ENCODE measurements at regions of chr7 and their contacts with region 1.

Region 1: DNA sequence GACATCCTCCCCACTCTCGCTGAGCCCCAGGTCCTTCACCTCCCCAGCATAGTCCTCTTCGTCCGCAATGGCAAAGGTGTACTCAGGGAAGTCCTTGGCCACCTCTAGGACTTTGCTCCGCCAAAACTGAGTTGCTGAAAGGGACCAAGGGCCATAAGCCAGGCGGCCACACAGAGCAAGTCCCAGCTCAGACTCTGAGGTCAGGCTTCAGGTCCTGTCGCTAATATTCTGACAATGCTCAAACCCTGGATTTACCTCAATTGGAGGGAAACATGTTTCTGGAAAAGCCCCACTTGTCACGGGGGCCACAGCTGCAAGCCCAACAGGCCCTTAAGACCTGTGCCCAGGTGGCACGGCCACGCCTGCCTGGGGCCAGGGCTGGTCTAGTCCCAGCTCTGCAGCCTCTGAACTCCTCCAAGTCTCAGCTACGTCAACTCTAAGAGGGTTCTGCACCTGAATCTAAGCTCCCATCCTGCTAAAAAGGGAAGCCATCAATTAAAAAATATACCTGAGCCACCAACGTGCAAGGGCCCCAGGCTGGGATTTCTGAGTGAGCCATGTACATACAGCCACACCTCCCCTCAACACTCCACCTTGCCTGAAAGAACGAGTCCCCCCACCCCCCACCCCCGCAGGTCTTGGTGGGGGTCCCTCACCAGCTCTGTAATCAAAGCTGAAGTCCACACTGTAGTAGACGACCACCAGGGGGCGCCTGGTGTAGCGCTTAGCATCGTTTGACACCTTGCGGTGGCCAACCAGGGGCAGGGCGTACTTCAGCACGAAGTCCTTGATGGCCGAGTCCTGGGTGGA is 22.9 kb downstream of the PDIA4 start:
- DNase-seq: peak; percentile 57 to 80 (median 73)
- ATAC-seq: peak; percentile 96
- H3K4me3 ChIP-seq: no peak overlapping the region
- H3K4me3 Mint-ChIP-seq: no peak overlapping the region
- H3K27ac ChIP-seq: no peak overlapping the region
- H3K27ac Mint-ChIP-seq: peak overlapping the region in 5 of 9 donors; percentile 65 to 90 (median 74)
- H3K4me1 ChIP-seq: no peaks in the 10 kb centered on the region
- H3K4me1 Mint-ChIP-seq: peaks cover 0 to 9% (median 5%) of the 10 kb centered on the region in 7 donors
- H3K27me3 ChIP-seq: no peaks in the 10 kb centered on the region
- H3K27me3 Mint-ChIP-seq: no peaks in the 10 kb centered on the region

Region 2: DNA sequence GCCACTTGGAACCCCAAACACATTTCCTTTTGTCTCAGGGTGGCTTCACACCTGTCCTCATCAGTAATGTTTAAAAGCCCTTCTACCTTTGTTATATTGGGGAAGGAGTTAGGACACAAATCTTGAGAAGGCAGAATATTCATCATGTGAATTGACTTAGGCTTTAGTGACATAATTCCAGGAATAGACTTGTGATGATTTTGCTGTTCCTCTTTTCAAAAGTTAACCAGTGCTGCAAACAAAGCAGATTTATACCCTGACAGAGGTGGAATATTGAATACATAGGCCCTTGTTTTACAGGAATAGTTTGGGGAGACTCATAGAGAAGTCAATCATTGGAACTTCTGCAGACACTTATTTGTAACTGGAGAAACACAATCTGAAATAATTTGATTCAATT is 58.0 kb after region 1 on chr7:
- CTCF ChIA-PET with region 1: interaction called, 49 read pairs
- POLR2A ChIA-PET with region 1: interaction called, 13 read pairs
- intact Hi-C with region 1: loop called (anchors 1 kb)
- DNase-seq: no peak
- ATAC-seq: no peak
- H3K4me3 ChIP-seq: no peak overlapping the region
- H3K4me3 Mint-ChIP-seq: peak overlapping the region in 4 of 10 donors; percentile 37 to 72 (median 54)
- H3K27ac ChIP-seq: no peak overlapping the region
- H3K27ac Mint-ChIP-seq: peak overlapping the region in 3 of 9 donors; percentile 23 to 34 (median 29)
- H3K4me1 ChIP-seq: no peaks in the 10 kb centered on the region
- H3K4me1 Mint-ChIP-seq: peaks cover 5 to 16% (median 10%) of the 10 kb centered on the region in 7 donors
- H3K27me3 ChIP-seq: no peaks in the 10 kb centered on the region
- H3K27me3 Mint-ChIP-seq: no peaks in the 10 kb centered on the region

Region 3: GRCh38 chr7:149409895-149410294 is 404.4 kb after region 1 on chr7:
- CTCF ChIA-PET with region 1: interaction called, 3 read pairs
- POLR2A ChIA-PET with region 1: no interaction called
- intact Hi-C with region 1: loop called in 1 of 2 experiments (anchors 5 kb)
- DNase-seq: no peak
- ATAC-seq: no peak
- H3K4me3 ChIP-seq: no peak overlapping the region
- H3K4me3 Mint-ChIP-seq: no peak overlapping the region
- H3K27ac ChIP-seq: no peak overlapping the region
- H3K27ac Mint-ChIP-seq: no peak overlapping the region
- H3K4me1 ChIP-seq: no peaks in the 10 kb centered on the region
- H3K4me1 Mint-ChIP-seq: peaks cover 0 to 12% (median 10%) of the 10 kb centered on the region in 7 donors
- H3K27me3 ChIP-seq: no peaks in the 10 kb centered on the region
- H3K27me3 Mint-ChIP-seq: peaks cover 22 to 42% (median 36%) of the 10 kb centered on the region in 5 donors